OCI-LY7 (cell line): ENCODE measurements at regions of chr7 and their contacts with region 1.

Region 1: DNA sequence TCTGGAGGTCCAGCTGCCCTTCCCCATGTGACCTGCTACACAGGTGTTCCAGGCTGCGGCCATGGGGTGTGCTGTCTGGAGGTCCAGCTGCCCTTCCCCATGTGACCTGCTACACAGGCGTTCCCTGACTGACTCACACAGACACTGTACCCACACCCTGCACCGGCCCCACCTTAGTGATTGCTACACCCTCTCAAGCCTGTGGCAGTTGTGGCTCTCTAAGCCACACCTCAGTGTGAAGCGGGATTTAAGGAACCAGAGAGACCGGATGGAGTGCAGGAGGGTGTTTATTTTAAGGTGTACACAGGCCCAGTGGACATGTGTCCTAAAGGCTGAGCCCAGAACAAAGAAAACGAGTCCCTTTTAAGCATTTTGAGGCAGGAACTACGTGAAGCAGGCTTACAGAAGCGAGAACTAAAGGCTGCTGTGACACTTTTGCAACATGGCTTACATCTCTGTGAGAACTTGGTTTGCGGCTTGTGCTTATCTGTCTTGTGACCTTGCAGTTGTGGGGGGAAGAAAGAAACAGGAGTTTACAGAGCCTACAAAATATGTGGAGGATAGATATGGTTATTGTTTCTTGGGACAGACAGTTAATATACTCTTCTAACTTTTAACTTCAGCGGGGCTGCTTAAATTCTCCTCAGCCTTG is 326.4 kb downstream of the PAXIP1 start:
- DNase-seq: no peak
- H3K4me3 ChIP-seq: no peak overlapping the region
- H3K27ac ChIP-seq: no peak overlapping the region
- H3K4me1 ChIP-seq: no peaks in the 10 kb centered on the region
- CTCF ChIP-seq: no peak

Region 2: GRCh38 chr7:154610903-154611302 is 65.6 kb before region 1 on chr7:
- CTCF ChIA-PET with region 1: no interaction called
- POLR2A ChIA-PET with region 1: no interaction called
- intact Hi-C with region 1: no loop called
- DNase-seq: no peak
- H3K4me3 ChIP-seq: no peak overlapping the region
- H3K27ac ChIP-seq: no peak overlapping the region
- H3K4me1 ChIP-seq: no peaks in the 10 kb centered on the region
- CTCF ChIP-seq: no peak

Region 3: DNA sequence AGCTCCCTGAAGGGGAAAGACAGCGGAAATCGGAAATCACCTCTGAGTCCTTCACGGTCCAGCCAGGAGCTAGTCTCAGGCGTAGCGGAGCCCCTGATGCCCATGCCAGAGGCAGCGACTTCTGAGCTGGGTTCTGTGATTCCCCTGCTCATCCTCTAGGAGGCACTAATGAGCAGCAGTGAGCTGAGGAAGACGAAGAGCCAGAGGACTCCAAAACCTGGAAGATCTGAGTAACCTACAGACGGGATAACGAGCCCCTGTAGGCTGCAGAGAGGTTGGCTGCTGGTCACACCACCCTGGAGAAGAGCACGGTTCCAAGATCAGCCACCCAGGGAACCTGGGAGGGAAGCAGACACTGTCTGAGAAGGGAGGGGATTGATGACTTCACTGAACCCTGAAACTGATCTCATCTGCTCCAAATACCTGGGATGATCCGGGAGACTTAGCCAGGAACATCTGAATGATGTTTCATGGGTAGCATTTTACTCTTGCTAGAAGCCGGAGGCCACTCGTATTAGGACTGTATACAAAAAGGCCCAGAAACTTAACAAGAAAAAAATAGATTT is 22.3 kb after region 1 on chr7:
- CTCF ChIA-PET with region 1: no interaction called
- POLR2A ChIA-PET with region 1: no interaction called
- intact Hi-C with region 1: loop called (anchors 2 kb)
- DNase-seq: peak; percentile 3
- H3K4me3 ChIP-seq: no peak overlapping the region
- H3K27ac ChIP-seq: no peak overlapping the region
- H3K4me1 ChIP-seq: no peaks in the 10 kb centered on the region
- CTCF ChIP-seq: peak; percentile 74